Ovary (tissue), 10 donors: ENCODE measurements at regions of chr9 and their contacts with region 1.

Region 1: GRCh38 chr9:68584189-68585033 is 43.7 kb upstream of the TMEM252 start:
- DNase-seq: peak; percentile 59 to 78 (median 74)
- H3K4me3 ChIP-seq: no peak overlapping the region
- H3K27ac ChIP-seq: no peak overlapping the region
- H3K4me1 ChIP-seq: no peaks in the 10 kb centered on the region
- H3K27me3 ChIP-seq: no peaks in the 10 kb centered on the region
- CTCF ChIP-seq: peak; percentile 53 to 66 (median 66)
- EP300 ChIP-seq: no peak
- POLR2A ChIP-seq: no peak

Region 2: DNA sequence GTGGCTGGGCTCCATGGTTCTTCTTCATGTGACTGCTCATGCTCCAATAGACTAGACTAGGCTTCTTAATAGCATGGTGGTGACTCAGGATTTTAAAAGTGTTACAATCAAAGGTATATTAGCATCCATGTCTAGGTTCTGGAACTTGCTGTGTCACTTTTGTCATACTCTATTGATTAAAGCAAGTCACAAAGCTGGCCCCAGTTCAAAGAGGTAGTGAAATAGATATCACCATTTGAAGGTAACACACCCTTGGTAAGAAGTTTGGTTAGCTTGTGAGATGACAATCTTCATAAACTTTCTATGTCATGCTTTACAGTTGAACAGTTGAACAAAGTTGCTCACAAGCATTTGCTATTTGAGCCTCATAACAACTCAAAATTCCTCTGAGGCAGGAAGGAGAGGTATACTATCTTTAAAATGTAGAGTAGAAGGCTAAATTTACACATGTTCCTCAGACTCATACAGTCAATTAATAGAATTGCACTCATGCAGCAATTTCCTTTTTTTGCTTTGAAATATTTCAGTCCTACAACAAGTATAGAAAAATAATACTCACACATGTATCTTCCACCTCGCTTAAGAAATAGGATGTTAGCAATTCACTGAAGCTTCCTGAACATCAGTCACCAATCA is 13.1 kb after region 1 on chr9:
- intact Hi-C with region 1: no loop called
- DNase-seq: no peak
- H3K4me3 ChIP-seq: no peak overlapping the region
- H3K27ac ChIP-seq: no peak overlapping the region
- H3K4me1 ChIP-seq: no peaks in the 10 kb centered on the region
- H3K27me3 ChIP-seq: no peaks in the 10 kb centered on the region
- CTCF ChIP-seq: no peak
- EP300 ChIP-seq: no peak
- POLR2A ChIP-seq: no peak

Region 3: DNA sequence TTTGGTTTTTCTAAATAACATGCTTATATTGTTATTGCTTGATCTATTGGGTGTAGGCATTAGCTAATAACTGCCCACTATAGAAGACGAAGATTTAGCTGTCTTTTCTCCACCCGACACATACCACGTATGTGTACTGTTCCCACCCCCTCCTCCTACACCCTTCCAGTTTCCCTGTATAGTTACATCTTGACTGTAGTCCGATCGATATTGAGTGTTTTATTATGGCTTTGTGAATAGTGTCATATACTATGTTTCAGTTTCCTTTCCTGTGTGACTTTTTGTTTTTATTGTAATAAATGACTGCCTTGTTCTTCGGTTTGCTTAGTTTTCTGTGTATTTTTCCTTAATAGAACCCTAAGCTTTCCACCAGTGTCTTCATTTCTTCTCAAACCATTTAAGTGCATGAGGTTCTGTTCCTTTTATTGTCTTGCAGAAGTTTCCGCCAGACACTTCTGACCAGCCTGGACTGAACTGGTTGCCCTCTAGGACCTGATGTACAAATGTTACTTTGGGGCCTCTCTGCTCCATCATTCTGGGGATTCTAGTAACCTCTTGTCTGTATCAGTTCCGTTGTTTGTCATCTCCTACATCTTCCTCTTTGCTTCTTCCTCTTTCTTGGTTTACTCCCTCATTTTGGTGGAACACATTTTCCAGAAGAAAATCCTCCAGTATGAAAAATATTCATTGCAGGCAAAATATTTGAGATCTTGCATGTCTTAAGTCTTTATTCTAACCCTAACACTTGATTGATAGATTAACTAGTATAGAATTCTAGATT is 367.7 kb after region 1 on chr9:
- intact Hi-C with region 1: loop called in 1 of 4 experiments (anchors 10 kb)
- DNase-seq: no peak
- H3K4me3 ChIP-seq: no peak overlapping the region
- H3K27ac ChIP-seq: no peak overlapping the region
- H3K4me1 ChIP-seq: no peaks in the 10 kb centered on the region
- H3K27me3 ChIP-seq: no peaks in the 10 kb centered on the region
- CTCF ChIP-seq: no peak
- EP300 ChIP-seq: no peak
- POLR2A ChIP-seq: no peak

Region 4: DNA sequence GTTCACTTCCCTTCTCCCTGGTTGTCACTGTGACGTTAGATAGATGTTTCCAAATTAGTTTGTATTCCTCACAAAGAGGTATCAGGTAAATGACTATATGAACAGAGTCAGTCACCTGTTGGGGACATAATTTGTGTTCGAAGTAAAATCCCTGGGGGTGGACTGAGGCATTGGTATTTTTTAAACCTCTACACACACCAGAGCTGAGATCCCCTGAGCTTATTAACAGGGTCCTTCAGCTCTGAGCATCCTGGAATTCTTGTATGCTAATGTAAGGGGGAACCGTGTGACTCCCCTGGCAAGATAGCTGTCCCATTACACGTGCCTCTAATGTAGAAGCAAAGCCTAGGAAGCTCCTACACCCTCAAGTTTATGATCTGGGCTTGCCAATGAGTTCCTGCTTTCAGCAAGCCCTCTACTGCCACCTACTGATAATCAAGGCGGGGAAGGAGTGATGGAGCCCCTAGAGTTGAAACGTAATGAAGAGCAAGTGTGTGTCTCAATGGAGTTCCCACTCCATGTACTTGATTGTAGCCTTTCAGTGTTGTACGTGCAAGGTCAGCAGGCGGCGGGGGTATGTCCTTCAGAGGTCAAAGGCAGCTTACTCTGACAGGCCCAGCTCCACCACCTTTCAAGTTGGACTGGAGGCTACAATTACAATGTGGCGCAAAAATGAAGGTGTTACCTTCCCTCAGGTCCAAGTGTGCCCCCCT is 415.1 kb after region 1 on chr9:
- intact Hi-C with region 1: loop called in 1 of 4 experiments (anchors 10 kb)
- DNase-seq: peak in 4 of 5 donors; percentile 24 to 65 (median 35)
- H3K4me3 ChIP-seq: no peak overlapping the region
- H3K27ac ChIP-seq: no peak overlapping the region
- H3K4me1 ChIP-seq: no peaks in the 10 kb centered on the region
- H3K27me3 ChIP-seq: no peaks in the 10 kb centered on the region
- CTCF ChIP-seq: peak in 2 of 3 donors; percentile 28 to 47
- EP300 ChIP-seq: no peak
- POLR2A ChIP-seq: no peak